ENCODE measurements at regions of chr6 and their contacts with region 1.

Region 1: DNA sequence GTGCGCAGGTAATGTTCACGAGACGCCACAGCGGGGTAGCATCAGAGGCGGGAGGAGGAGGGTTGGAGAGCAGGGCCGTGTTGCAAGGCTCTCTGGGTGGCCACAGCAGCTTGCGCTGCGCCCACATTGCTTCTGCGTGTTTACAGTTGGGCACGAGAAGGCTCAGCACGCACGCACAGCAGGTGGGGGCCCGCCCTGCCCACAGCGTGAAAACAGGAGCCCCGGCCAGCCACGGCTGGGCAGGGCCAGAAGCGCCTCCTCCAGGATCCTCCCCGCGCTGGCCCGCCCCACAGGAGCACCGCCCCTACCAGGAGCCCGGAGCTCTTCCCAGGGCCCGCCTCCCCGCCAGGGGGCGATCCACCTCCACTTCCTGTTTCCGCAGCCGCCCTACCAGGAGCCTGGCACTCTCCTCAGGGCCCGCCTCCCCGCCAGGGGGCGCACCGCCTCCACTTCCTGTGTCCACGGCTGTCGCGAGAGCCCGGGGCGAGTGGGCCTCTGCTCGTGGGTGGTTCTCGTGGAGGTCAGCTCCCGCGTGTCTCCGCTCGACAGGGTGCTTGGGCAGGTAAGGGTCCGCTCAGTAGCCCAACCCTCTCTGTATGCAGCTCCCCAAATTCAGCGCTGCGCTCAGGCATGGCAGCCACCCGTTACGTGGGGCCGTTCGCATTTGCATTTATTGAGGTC is at the start of gene FAM50B:
- DNase-seq: peak; percentile 80
- ATAC-seq: peak; percentile 96
- H3K4me3 ChIP-seq: peak within 1 kb of the TSS; percentile 65
- H3K27ac ChIP-seq: peak within 1 kb of the TSS; percentile 69
- H3K4me1 ChIP-seq: peaks cover 8% of the 10 kb centered on the region; the same call in 1 of the 2 replicates
- H3K27me3 ChIP-seq: no peaks in the 10 kb centered on the region
- CTCF ChIP-seq: peak; percentile 99
- POLR2A ChIP-seq: no peak
- RAD21 ChIP-seq: peak; percentile 86
- total RNA-seq, gene FAM50B: 3.9 and 4.1 TPM in 2 replicates

Region 2: GRCh38 chr6:3899970-3900439 is 50.9 kb after region 1 on chr6:
- CTCF ChIA-PET with region 1: no interaction called
- POLR2A ChIA-PET with region 1: no interaction called
- dilution Hi-C with region 1: no loop called
- in situ Hi-C with region 1: no loop called
- intact Hi-C with region 1: no loop called
- DNase-seq: no peak
- ATAC-seq: no peak
- H3K4me3 ChIP-seq: no peak overlapping the region
- H3K27ac ChIP-seq: no peak overlapping the region
- H3K4me1 ChIP-seq: no peaks in the 10 kb centered on the region
- H3K27me3 ChIP-seq: no peaks in the 10 kb centered on the region
- CTCF ChIP-seq: no peak
- POLR2A ChIP-seq: no peak
- RAD21 ChIP-seq: no peak

Region 3: GRCh38 chr6:3929281-3929798 is 80.3 kb after region 1 on chr6:
- CTCF ChIA-PET with region 1: interaction called, 6 read pairs
- POLR2A ChIA-PET with region 1: no interaction called
- dilution Hi-C with region 1: no loop called
- in situ Hi-C with region 1: no loop called
- intact Hi-C with region 1: loop called (anchors 1 kb)
- DNase-seq: peak; percentile 77
- ATAC-seq: peak; percentile 83
- H3K4me3 ChIP-seq: no peak overlapping the region
- H3K27ac ChIP-seq: peak overlapping the region; percentile 56; the same call in 1 of the 2 replicates
- H3K4me1 ChIP-seq: peaks cover 14% of the 10 kb centered on the region
- H3K27me3 ChIP-seq: no peaks in the 10 kb centered on the region
- CTCF ChIP-seq: no peak
- POLR2A ChIP-seq: no peak
- RAD21 ChIP-seq: no peak

Region 4: DNA sequence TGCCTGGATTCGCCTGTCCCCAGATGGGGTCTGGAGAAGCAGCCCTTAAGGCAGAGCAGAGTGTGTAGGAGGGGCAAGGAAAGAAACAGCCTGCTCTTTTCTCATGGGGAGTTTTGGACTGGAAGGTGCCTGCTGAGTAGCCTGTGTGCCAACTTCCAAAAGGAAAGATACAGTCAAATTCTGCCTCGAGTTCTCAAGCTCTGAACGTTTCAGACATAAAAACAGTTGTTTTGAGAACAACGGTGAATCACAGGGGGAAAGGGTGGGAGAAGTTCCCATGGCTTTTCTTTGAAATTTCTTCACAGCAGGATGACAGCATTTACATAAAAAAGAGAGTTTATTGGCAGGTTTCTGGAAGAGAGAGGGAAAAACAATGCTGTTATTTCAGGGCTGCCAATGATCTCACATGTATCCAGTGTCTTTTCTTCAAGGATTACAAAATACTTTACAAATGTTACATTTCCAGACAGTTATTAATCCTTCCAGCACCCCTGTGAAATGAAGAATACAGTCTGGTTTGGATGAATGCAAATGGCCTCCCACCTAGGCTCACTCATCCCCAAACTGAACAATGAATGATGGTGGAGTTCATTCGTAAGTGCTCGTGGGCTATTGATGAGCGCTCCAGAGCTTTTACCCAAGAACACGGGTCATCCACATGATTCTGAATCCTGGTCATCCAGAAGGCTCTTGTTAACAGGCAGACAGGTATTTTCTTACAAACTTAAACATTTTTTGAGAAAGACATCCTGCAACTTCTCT is 320.1 kb after region 1 on chr6:
- CTCF ChIA-PET with region 1: no interaction called
- POLR2A ChIA-PET with region 1: no interaction called
- dilution Hi-C with region 1: no loop called
- in situ Hi-C with region 1: no loop called
- intact Hi-C with region 1: loop called (anchors 5 kb)
- DNase-seq: peak; percentile 42
- ATAC-seq: peak; percentile 12; the same call in 1 of the 2 replicates
- H3K4me3 ChIP-seq: no peak overlapping the region
- H3K27ac ChIP-seq: peak overlapping the region; percentile 46; the same call in 1 of the 2 replicates
- H3K4me1 ChIP-seq: peaks cover 13% of the 10 kb centered on the region
- H3K27me3 ChIP-seq: no peaks in the 10 kb centered on the region; the same call in 1 of the 2 replicates
- CTCF ChIP-seq: no peak
- POLR2A ChIP-seq: no peak
- RAD21 ChIP-seq: no peak